Activated CD4-positive, alpha-beta T cell treated with anti-CD3 and anti-CD28 coated beads for 36 hours (primary cell): ENCODE measurements at regions of chr6 and their contacts with region 1.

Region 1: DNA sequence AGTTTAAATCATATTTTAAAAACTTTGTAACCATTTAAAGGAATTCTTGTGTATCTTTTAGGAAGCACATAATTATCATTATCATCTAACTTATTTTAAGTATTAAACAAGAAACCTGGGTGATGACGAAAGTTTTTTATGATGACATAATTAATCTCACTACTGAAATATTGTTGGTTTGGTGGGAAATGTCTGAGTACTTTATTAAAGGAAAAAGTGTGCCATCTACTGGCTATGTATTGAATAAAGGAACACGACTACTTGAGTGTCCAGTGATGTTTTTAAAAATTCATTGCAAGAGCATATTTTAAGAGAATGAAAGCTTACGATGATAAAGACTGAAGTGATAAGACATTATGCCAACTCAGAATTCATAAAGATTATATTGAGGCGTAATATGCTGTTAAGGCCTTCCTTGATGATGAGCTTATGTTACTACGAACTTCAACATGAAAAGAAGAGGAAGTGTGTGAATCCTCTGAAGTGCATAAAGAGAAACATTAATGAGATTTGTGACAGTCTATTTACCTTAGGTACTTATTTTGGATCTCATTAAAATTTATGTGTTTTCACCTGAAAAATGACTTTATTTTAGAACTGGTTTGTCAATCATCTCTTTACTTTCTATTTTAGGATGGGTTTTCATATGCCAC is 12.0 kb upstream of the TRMT11 start:
- DNase-seq: no peak
- ATAC-seq: peak; percentile 80
- H3K4me3 Mint-ChIP-seq: no peak overlapping the region
- H3K27ac Mint-ChIP-seq: peak overlapping the region; percentile 43
- H3K4me1 Mint-ChIP-seq: peaks cover 3% of the 10 kb centered on the region
- H3K27me3 Mint-ChIP-seq: no peaks in the 10 kb centered on the region

Region 2: GRCh38 chr6:125314019-125314581 is 660.2 kb before region 1 on chr6:
- CTCF ChIA-PET with region 1: interaction called, 4 read pairs
- POLR2A ChIA-PET with region 1: no interaction called
- intact Hi-C with region 1: loop called (anchors 1 to 2 kb)
- DNase-seq: peak; percentile 62
- ATAC-seq: peak; percentile 74
- H3K4me3 Mint-ChIP-seq: no peak overlapping the region
- H3K27ac Mint-ChIP-seq: no peak overlapping the region
- H3K4me1 Mint-ChIP-seq: no peaks in the 10 kb centered on the region
- H3K27me3 Mint-ChIP-seq: peaks cover 2% of the 10 kb centered on the region

Region 3: DNA sequence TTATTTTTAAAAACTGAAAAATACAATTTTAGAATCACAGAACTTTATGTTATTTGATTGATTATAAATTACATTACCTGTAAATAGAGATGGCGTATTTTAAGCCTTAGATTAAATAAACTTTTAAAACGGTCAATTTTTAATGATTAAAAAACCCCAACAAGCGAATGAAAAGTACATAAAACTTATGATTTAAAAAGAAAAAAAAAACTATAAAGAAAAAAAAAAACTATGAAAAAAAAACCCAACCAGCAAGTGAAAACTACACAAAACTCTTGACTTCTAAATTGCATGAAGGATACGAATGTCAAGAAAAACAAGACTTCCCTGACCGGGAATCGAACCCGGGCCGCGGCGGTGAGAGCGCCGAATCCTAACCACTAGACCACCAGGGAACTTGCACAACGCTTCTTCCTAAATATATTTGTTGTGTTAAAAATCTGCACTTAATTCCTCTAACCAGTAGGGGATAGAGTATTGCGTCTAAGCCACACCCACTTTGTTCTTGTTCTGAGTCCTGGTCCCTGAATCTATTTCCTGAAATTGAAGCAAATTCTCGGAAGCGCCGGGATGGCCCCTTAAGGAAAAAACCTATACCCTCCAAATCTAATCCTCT is 194.3 kb before region 1 on chr6:
- CTCF ChIA-PET with region 1: interaction called, 25 read pairs
- POLR2A ChIA-PET with region 1: no interaction called
- intact Hi-C with region 1: loop called (anchors 1 kb)
- DNase-seq: peak; percentile 89
- ATAC-seq: peak; percentile 77
- H3K4me3 Mint-ChIP-seq: no peak overlapping the region
- H3K27ac Mint-ChIP-seq: no peak overlapping the region
- H3K4me1 Mint-ChIP-seq: peaks cover 20% of the 10 kb centered on the region
- H3K27me3 Mint-ChIP-seq: no peaks in the 10 kb centered on the region

Region 4: GRCh38 chr6:125858427-125859320 is 115.7 kb before region 1 on chr6:
- CTCF ChIA-PET with region 1: interaction called, 13 read pairs
- POLR2A ChIA-PET with region 1: no interaction called
- intact Hi-C with region 1: loop called in 1 of 2 experiments (anchors 2 kb)
- DNase-seq: peak; percentile 43
- ATAC-seq: peak; percentile 71
- H3K4me3 Mint-ChIP-seq: no peak overlapping the region
- H3K27ac Mint-ChIP-seq: no peak overlapping the region
- H3K4me1 Mint-ChIP-seq: peaks cover 5% of the 10 kb centered on the region
- H3K27me3 Mint-ChIP-seq: no peaks in the 10 kb centered on the region

Region 5: GRCh38 chr6:125899726-125900182 is 74.6 kb before region 1 on chr6:
- CTCF ChIA-PET with region 1: interaction called, 10 read pairs
- POLR2A ChIA-PET with region 1: no interaction called
- intact Hi-C with region 1: no loop called
- DNase-seq: no peak
- ATAC-seq: no peak
- H3K4me3 Mint-ChIP-seq: no peak overlapping the region
- H3K27ac Mint-ChIP-seq: no peak overlapping the region
- H3K4me1 Mint-ChIP-seq: peaks cover 8% of the 10 kb centered on the region
- H3K27me3 Mint-ChIP-seq: no peaks in the 10 kb centered on the region

Region 6: DNA sequence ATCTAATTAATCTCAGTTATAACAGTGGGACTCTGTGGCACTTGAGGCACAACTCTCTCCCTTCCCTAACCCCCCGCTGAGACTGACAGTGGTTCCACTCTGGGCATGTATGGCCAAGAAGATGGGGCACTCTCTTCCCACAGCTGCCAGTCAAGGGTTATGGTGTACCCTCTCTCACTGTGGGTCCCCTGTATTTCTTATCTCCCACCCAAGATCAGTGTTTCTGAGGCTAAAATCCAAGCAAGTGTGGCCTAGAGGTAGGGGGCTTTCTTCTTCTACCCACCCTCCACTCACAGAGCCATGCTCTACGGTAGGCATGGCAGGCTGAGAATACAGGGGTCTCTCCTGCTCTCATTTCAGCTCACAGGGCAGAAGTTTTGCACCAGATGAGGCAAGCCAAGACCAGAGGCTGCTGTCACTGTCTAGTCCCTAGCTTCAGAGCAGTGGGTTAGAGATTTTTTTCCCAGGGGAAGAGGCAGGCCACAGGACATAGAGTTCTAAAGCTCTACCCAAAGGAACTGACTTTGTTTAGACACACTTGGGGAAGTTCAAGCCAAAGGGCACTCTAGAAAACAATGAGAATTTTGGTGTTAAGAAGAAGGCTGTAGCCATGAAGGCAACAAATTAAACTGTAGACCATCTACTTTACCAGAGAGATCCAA is 49.5 kb before region 1 on chr6:
- CTCF ChIA-PET with region 1: no interaction called
- POLR2A ChIA-PET with region 1: no interaction called
- intact Hi-C with region 1: no loop called
- DNase-seq: no peak
- ATAC-seq: no peak
- H3K4me3 Mint-ChIP-seq: no peak overlapping the region
- H3K27ac Mint-ChIP-seq: no peak overlapping the region
- H3K4me1 Mint-ChIP-seq: peaks cover 22% of the 10 kb centered on the region
- H3K27me3 Mint-ChIP-seq: no peaks in the 10 kb centered on the region

Region 7: GRCh38 chr6:125963817-125964216 is 10.5 kb before region 1 on chr6:
- CTCF ChIA-PET with region 1: interaction called, 23 read pairs
- POLR2A ChIA-PET with region 1: no interaction called
- intact Hi-C with region 1: no loop called
- DNase-seq: no peak
- ATAC-seq: no peak
- H3K4me3 Mint-ChIP-seq: no peak overlapping the region
- H3K27ac Mint-ChIP-seq: no peak overlapping the region
- H3K4me1 Mint-ChIP-seq: peaks cover 16% of the 10 kb centered on the region
- H3K27me3 Mint-ChIP-seq: no peaks in the 10 kb centered on the region